Activated B cell treated with CpG ODN at 0.5 μM for 24 hours (primary cell): ENCODE measurements at regions of chr20 and their contacts with region 1.

Region 1: GRCh38 chr20:10090588-10091166 is 55.9 kb downstream of the ANKEF1 start:
- DNase-seq: no peak
- ATAC-seq: peak; percentile 47
- H3K4me3 Mint-ChIP-seq: no peak overlapping the region
- H3K27ac Mint-ChIP-seq: no peak overlapping the region
- H3K4me1 Mint-ChIP-seq: no peaks in the 10 kb centered on the region
- H3K27me3 Mint-ChIP-seq: peaks cover 2% of the 10 kb centered on the region
- CTCF ChIP-seq: no peak

Region 2: DNA sequence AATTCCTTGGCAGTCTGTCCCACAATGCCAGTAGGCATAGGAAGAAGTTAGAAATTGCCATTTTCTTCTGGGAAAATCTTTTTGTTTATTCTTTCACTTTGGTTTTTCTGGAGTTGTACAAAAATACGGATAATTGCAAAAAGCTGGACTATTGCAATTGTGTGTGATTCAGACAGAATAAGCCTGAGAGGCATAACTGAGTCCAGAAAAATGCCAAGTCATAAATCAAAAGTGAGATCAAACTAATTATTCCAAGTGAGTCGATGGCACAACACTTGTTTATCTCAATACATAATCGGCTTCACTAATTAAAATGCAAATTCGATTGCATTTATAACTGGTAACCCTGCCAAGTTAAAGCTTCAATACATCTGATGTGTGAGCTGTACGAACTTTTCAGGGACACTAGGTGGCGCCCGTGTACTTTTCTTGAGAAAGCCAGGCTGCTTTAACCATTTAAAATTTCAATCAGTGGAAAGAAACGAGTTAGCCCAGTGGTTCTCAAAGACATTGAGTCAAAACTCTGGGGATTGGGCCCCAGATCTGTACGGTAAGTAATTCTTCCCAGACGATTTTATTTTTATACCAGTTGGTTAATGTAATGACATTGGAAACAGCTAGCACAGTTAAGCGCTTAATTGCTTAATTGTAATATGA is 473.7 kb before region 1 on chr20:
- CTCF ChIA-PET with region 1: interaction called, 11 read pairs
- POLR2A ChIA-PET with region 1: no interaction called
- intact Hi-C with region 1: no loop called
- DNase-seq: no peak
- ATAC-seq: no peak
- H3K4me3 Mint-ChIP-seq: no peak overlapping the region
- H3K27ac Mint-ChIP-seq: no peak overlapping the region
- H3K4me1 Mint-ChIP-seq: peaks cover 9% of the 10 kb centered on the region
- H3K27me3 Mint-ChIP-seq: peaks cover 18% of the 10 kb centered on the region
- CTCF ChIP-seq: no peak

Region 3: DNA sequence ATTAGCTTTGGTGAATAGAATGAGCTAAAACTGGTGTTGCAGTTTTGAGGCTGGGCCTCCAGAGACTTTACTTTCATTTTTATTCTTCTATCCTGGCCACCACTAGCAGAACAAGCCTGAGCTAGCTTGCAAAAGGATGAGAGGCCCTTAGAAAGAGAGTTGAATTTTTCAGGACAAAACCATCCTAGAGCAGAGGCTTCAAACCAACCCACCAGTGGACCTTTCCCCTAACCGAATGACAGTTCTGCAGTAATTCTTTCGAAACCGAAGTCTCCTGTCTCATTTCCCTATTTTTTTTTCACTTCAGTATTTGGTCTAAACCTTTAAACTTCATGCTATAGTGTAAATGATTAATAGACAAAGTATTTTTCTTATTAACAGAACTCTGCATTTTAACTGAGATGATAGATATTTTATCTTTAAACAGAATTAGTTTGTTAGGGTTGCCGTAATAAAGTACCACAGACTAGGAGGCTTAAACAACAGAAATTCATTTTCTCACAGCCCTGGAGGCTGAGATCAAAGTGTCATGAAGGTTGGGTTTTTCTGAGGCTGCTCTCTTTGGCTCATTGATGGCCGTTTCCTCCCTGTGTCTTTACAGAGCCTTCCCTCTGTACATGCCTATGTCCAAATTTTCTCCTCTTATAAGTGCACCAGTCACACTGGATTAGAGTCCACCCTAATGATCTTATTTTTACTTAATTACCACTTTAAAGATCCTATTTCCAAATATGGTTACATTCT is 171.2 kb before region 1 on chr20:
- CTCF ChIA-PET with region 1: no interaction called
- POLR2A ChIA-PET with region 1: no interaction called
- intact Hi-C with region 1: loop called (anchors 5 kb)
- DNase-seq: no peak
- ATAC-seq: no peak
- H3K4me3 Mint-ChIP-seq: no peak overlapping the region
- H3K27ac Mint-ChIP-seq: no peak overlapping the region
- H3K4me1 Mint-ChIP-seq: peaks cover 16% of the 10 kb centered on the region
- H3K27me3 Mint-ChIP-seq: peaks cover 6% of the 10 kb centered on the region
- CTCF ChIP-seq: no peak

Region 4: GRCh38 chr20:9978397-9979004 is 112.2 kb before region 1 on chr20:
- CTCF ChIA-PET with region 1: interaction called, 141 read pairs
- POLR2A ChIA-PET with region 1: no interaction called
- intact Hi-C with region 1: loop called (anchors 1 kb)
- DNase-seq: no peak
- ATAC-seq: peak; percentile 83
- H3K4me3 Mint-ChIP-seq: no peak overlapping the region
- H3K27ac Mint-ChIP-seq: no peak overlapping the region
- H3K4me1 Mint-ChIP-seq: no peaks in the 10 kb centered on the region
- H3K27me3 Mint-ChIP-seq: peaks cover 9% of the 10 kb centered on the region
- CTCF ChIP-seq: peak; percentile 63

Region 5: DNA sequence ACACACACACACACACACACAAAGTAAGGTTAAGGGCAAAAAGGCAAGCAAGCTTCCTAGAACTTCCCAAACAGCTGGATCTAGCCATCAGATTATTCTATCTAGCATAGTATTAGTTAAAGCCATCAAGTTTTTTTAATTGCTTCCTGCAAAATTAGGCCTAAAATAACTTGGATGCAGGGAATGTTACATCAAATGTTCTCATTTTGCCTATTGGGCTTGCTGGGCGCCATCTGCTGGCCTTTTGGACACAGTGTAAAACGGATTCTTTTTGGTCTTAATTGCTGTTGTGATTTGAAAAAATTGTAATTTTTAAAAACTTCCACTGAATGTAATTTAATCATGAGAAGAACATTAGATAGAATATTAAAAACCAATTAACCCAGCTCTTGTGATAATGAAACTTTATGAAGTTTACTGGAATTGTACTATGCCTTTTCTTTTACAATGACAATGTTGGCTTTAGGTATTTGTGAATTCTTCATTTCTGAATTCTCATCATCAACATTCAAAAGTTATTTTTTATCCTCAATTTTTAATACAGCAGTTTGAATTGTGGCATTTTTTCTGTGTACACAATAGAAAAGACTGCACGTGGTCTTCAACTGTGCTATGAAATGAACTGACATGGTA is 336.5 kb after region 1 on chr20:
- CTCF ChIA-PET with region 1: no interaction called
- POLR2A ChIA-PET with region 1: no interaction called
- intact Hi-C with region 1: loop called (anchors 1 kb)
- DNase-seq: no peak
- ATAC-seq: no peak
- H3K4me3 Mint-ChIP-seq: no peak overlapping the region
- H3K27ac Mint-ChIP-seq: no peak overlapping the region
- H3K4me1 Mint-ChIP-seq: peaks cover 27% of the 10 kb centered on the region
- H3K27me3 Mint-ChIP-seq: no peaks in the 10 kb centered on the region
- CTCF ChIP-seq: peak; percentile 65

Region 6: DNA sequence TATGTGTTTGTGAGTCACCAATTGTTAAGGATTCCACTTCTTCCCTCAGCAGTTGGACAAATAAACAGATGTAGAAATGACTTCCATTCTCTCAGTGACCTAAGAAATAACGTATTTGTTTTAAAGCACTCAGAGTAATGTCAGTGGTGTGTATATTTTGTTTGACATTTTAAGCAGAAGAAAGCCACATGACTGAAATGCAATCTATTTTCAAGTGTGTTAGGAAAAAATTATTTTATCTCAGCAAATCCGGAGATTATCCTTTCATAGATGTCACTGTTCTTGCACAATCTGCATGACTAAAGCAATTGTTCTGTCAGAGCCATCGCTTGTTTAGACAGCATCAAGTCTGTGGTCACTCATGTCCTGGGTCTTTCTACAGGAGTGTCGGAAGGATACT is 506.0 kb after region 1 on chr20:
- CTCF ChIA-PET with region 1: no interaction called
- POLR2A ChIA-PET with region 1: no interaction called
- intact Hi-C with region 1: no loop called
- DNase-seq: no peak
- ATAC-seq: no peak
- H3K4me3 Mint-ChIP-seq: no peak overlapping the region
- H3K27ac Mint-ChIP-seq: no peak overlapping the region
- H3K4me1 Mint-ChIP-seq: no peaks in the 10 kb centered on the region
- H3K27me3 Mint-ChIP-seq: no peaks in the 10 kb centered on the region
- CTCF ChIP-seq: no peak

Region 7: GRCh38 chr20:10696650-10697049 is 606.0 kb after region 1 on chr20:
- CTCF ChIA-PET with region 1: no interaction called
- POLR2A ChIA-PET with region 1: no interaction called
- intact Hi-C with region 1: no loop called
- DNase-seq: no peak
- ATAC-seq: no peak
- H3K4me3 Mint-ChIP-seq: no peak overlapping the region
- H3K27ac Mint-ChIP-seq: no peak overlapping the region
- H3K4me1 Mint-ChIP-seq: no peaks in the 10 kb centered on the region
- H3K27me3 Mint-ChIP-seq: no peaks in the 10 kb centered on the region
- CTCF ChIP-seq: no peak